Breast epithelium (tissue), 4 donors: ENCODE measurements at regions of chr1 and their contacts with region 1.

Region 1: GRCh38 chr1:227838181-227838580 is 22.7 kb downstream of the PRSS38 start:
- DNase-seq: no peak
- H3K4me3 ChIP-seq: no peak overlapping the region
- H3K27ac ChIP-seq: no peak overlapping the region
- H3K4me1 ChIP-seq: no peaks in the 10 kb centered on the region
- H3K27me3 ChIP-seq: no peaks in the 10 kb centered on the region
- CTCF ChIP-seq: no peak
- POLR2A ChIP-seq: no peak

Region 2: GRCh38 chr1:226875641-226876295 is 962.4 kb before region 1 on chr1:
- intact Hi-C with region 1: loop called (anchors 5 kb)
- DNase-seq: no peak
- H3K4me3 ChIP-seq: no peak overlapping the region
- H3K27ac ChIP-seq: no peak overlapping the region
- H3K4me1 ChIP-seq: no peaks in the 10 kb centered on the region
- H3K27me3 ChIP-seq: no peaks in the 10 kb centered on the region
- CTCF ChIP-seq: no peak
- POLR2A ChIP-seq: no peak

Region 3: DNA sequence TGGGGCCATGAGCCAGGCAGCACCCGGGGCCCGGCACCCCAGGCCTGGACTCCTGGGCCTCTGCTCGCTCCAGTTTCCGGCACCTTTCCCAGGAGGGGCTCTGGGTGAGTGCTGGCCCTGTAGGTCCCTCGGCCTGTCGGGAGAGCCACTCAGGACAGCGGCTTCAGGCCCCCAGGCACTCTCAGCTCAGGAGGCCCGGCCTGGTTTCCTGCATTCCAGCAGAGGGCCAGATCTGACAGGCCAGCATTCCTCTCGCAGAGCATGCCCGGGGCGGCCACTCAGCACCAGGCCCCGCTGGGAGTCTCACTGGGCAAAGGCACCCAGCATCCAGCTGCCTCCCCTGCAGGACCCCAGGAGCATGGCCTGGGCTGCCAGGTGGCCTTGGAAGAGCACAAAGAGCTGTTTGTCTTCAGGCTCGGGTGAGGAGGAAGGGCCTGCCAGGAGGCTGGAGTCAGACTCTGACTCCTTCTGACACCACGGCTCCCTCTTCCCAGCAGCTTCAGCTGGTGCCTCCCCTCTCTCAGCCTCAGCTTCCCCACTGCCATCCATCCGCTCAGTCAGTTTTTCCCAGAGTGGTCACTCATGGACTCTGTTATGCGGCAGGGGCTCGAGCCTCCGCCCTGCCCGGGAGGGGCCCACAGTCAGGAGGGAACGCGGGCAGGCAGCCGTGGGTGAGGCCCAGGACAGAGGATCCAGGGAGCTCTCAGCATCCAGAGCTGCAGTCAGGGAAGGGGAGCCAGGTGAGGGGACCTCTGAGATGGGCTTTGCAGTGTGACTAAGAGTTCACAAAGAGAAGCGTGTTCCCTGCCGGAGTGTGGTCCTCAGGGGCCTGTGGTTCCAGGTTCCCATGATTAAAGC is 57.9 kb after region 1 on chr1:
- intact Hi-C with region 1: no loop called
- DNase-seq: peak; percentile 68 to 74
- H3K4me3 ChIP-seq: no peak overlapping the region
- H3K27ac ChIP-seq: peak overlapping the region; percentile 74 to 76
- H3K4me1 ChIP-seq: peaks cover 3 to 10% of the 10 kb centered on the region in 2 donors
- H3K27me3 ChIP-seq: no peaks in the 10 kb centered on the region
- CTCF ChIP-seq: no peak
- POLR2A ChIP-seq: no peak